Cardiac septum (tissue), 1 donor: ENCODE measurements at regions of chr1 and their contacts with region 1.

Region 1: DNA sequence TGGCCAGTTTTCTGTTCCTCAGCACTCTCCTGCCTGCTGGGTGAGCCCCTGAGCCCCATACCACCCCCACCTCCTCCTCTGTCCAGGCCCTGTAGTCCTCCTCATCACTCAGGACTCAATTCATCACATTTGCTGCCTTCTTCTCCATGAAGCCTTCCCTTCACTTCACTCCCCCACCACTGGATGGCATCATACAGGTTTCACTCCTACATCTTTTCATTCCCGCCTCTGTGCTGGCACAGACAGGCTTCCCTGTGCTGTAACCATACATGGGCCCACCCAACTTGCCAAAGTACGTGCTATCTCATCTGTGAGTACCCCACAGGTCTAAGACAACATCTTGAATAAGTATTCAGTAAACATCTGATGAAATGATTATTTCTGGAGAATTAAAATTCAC is 56.9 kb downstream of the SLC45A1 start:
- DNase-seq: no peak

Region 2: GRCh38 chr1:8211589-8212442 is 163.0 kb before region 1 on chr1:
- intact Hi-C with region 1: no loop called
- DNase-seq: peak; percentile 78

Region 3: GRCh38 chr1:8409106-8409505 is 34.3 kb after region 1 on chr1:
- intact Hi-C with region 1: loop called (anchors 5 kb)
- DNase-seq: no peak

Region 4: DNA sequence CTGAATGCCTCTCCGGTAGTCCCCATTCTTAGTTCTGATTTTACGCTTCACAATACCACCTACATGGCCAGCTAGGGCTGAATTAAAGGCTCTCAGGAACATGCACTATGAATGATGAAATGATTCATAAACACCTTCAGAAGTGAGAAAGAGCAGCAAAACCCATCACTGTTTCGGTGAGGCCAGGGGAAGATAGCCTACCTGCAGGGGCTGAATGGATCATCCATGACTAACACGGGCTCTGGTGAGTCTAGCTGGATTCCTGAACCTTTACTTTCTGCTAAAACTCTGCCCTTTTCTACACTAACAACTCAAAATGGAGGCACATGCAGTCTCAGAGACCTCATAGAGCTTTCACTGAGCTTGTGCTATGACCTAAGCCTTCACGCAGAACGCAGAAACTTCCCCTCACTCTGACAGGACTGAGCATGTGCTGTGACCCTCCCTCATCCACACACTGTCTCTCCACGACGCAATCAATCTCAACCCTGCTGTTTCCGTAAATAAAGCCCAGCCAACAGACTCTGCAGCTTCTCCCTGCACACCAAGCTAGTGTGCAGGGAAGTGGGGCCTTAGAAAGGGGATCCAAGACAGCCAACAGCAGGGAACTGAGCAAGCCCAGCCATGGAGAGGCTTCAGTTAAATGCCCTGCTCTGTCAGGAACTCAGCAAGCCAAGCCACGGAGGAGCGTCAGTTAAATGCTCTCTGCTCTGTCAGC is 150.9 kb after region 1 on chr1:
- intact Hi-C with region 1: loop called (anchors 5 kb)
- DNase-seq: peak; percentile 91